CD14-positive monocyte (primary cell): ENCODE measurements at regions of chr5 and their contacts with region 1.

Region 1: DNA sequence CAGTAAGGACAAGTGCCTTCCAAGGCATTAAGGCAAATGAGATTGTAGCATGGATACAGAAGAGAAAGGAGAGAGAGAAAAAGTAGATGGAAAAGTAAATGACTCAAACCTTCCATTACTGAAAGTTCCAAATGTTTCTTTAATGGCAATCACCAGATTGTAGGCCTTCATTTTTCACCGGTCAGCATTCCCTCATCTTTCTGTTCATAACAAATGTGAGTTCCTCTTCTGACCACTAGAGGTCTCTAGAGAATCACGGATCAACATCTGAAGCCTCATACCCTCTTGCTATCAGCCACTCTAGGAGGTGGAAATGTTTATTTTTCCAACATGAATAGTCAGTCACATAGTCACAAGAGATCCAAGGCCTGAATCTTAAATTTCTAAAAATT is 73.6 kb upstream of the RPS23 start:
- DNase-seq: peak; percentile 22 to 55 (median 46)
- H3K4me3 ChIP-seq: no peak overlapping the region
- H3K4me3 Mint-ChIP-seq: no peak overlapping the region
- H3K27ac ChIP-seq: no peak overlapping the region
- H3K27ac Mint-ChIP-seq: no peak overlapping the region
- H3K4me1 ChIP-seq: peaks cover under 1 to 4% of the 10 kb centered on the region in 2 donors
- H3K4me1 Mint-ChIP-seq: peaks cover 12% of the 10 kb centered on the region
- H3K27me3 ChIP-seq: no peaks in the 10 kb centered on the region
- H3K27me3 Mint-ChIP-seq: peaks cover 1% of the 10 kb centered on the region in 3 donors
- CTCF ChIP-seq: peak; percentile 93

Region 2: GRCh38 chr5:82641331-82642003 is 289.7 kb after region 1 on chr5:
- intact Hi-C with region 1: loop called in 1 of 2 experiments (anchors 5 kb)
- DNase-seq: peak; percentile 57 to 72 (median 64)
- H3K4me3 ChIP-seq: no peak overlapping the region
- H3K4me3 Mint-ChIP-seq: no peak overlapping the region
- H3K27ac ChIP-seq: no peak overlapping the region
- H3K27ac Mint-ChIP-seq: no peak overlapping the region
- H3K4me1 ChIP-seq: peaks cover 2 to 5% of the 10 kb centered on the region in 2 donors
- H3K4me1 Mint-ChIP-seq: peaks cover 8% of the 10 kb centered on the region
- H3K27me3 ChIP-seq: no peaks in the 10 kb centered on the region
- H3K27me3 Mint-ChIP-seq: peaks cover 0 to 5% (median 0%) of the 10 kb centered on the region in 3 donors
- CTCF ChIP-seq: peak; percentile 82

Region 3: DNA sequence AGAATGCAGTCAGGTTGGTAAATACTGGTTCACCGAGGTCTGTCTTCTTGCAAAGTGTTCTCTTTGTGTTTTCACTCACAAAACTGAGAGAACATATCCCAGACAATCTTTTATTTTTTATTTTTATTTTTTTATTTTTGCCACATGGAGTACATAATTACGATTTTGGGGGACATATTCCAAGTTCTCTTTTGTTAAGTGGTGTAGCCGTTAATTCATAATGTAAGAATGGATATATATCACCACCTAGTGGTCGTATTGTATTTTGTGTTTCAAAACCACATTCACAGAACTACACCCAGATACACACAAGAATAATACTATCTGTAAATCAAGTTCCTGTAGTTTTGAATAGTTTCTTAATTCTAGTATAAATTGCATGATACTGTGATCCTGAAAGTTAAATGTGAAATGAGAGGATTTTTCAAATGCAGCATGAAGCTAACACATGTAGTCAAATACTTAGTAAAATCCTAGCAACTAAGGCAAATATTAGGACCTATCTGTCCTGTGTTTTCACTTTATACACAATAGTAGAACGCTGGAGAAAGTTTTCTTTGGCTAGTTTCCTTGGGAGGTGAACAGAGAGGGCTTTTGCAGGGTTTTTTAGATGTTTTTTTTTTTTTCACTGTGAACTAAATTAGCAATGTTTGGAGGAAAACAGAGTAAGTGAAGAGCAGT is 1212.5 kb after region 1 on chr5:
- intact Hi-C with region 1: loop called (anchors 5 kb)
- DNase-seq: peak in 2 of 3 donors; percentile 9 to 13
- H3K4me3 ChIP-seq: no peak overlapping the region
- H3K4me3 Mint-ChIP-seq: no peak overlapping the region
- H3K27ac ChIP-seq: peak overlapping the region in 1 of 2 donors; percentile 6
- H3K27ac Mint-ChIP-seq: peak overlapping the region in 1 of 7 donors; percentile 30
- H3K4me1 ChIP-seq: no peaks in the 10 kb centered on the region
- H3K4me1 Mint-ChIP-seq: no peaks in the 10 kb centered on the region
- H3K27me3 ChIP-seq: no peaks in the 10 kb centered on the region
- H3K27me3 Mint-ChIP-seq: peaks cover 0 to 2% (median 0%) of the 10 kb centered on the region in 3 donors
- CTCF ChIP-seq: peak; percentile 74